Activated B cell treated with CpG ODN at 0.5 μM for 24 hours (primary cell): ENCODE measurements at regions of chr9 and their contacts with region 1.

Region 1: DNA sequence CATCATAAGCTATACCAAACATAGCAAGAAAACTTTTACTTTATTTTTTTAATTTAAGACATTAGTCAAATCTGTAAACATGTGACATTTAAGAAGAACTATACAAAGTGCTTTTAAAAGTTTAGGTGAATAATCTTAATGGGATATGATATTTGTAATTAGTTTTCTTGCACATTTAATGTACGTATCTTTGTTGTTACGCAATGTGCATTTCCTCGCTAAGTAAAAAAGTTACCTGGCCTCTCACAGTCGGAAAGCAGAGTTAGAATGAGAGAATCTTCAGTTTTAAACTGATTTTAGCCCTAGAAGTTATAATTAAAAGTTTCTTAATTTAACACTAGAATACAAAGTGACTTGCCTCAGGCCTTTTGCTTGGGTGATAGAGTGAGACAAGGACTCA is 589.8 kb downstream of the DMRTA1 start:
- DNase-seq: no peak
- ATAC-seq: no peak
- H3K4me3 Mint-ChIP-seq: no peak overlapping the region
- H3K27ac Mint-ChIP-seq: no peak overlapping the region
- H3K4me1 Mint-ChIP-seq: no peaks in the 10 kb centered on the region
- H3K27me3 Mint-ChIP-seq: no peaks in the 10 kb centered on the region
- CTCF ChIP-seq: no peak

Region 2: DNA sequence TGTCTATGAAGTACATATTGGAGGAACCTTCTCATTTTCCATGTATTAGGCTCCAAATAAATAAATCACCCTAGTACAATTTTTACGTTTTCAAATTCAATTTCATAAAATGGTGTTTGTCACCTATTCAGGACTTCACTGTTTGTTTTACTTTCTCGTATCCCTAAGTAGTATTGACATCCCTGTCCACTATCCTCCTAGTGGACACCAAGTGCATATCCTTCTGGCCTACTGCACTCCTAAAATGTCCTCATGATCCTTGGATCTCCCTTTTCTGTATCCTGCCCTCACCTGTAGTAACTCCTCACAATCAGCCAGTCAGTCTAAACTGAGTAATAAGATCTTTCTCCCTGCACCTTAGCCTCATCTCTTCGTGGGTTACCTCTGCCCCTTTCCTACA is 49.9 kb before region 1 on chr9:
- CTCF ChIA-PET with region 1: no interaction called
- POLR2A ChIA-PET with region 1: no interaction called
- intact Hi-C with region 1: no loop called
- DNase-seq: no peak
- ATAC-seq: no peak
- H3K4me3 Mint-ChIP-seq: no peak overlapping the region
- H3K27ac Mint-ChIP-seq: no peak overlapping the region
- H3K4me1 Mint-ChIP-seq: no peaks in the 10 kb centered on the region
- H3K27me3 Mint-ChIP-seq: no peaks in the 10 kb centered on the region
- CTCF ChIP-seq: no peak

Region 3: DNA sequence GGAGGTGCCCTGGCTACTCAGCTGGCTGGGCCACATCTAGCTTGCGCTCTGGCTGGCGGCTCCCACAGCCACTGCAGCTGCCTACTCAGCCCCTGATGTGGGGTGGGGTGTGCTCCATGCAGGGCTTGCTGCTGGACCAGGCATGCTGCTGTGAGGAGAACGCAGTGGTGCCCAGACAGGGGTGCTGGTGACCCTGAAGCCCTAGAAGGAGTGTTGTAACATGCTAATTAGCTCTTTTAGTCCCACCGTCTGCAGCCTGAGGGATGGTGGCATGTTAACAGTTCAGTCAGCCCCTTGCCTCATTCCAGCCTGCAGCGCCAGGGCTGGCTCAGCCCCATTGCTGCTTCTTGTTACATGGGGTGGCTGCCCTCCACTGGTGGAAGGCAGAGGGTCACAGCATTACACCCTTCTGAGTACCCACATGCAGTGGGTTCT is 52.5 kb after region 1 on chr9:
- CTCF ChIA-PET with region 1: no interaction called
- POLR2A ChIA-PET with region 1: no interaction called
- intact Hi-C with region 1: loop called (anchors 10 kb)
- DNase-seq: no peak
- ATAC-seq: no peak
- H3K4me3 Mint-ChIP-seq: no peak overlapping the region
- H3K27ac Mint-ChIP-seq: no peak overlapping the region
- H3K4me1 Mint-ChIP-seq: no peaks in the 10 kb centered on the region
- H3K27me3 Mint-ChIP-seq: no peaks in the 10 kb centered on the region
- CTCF ChIP-seq: no peak

Region 4: DNA sequence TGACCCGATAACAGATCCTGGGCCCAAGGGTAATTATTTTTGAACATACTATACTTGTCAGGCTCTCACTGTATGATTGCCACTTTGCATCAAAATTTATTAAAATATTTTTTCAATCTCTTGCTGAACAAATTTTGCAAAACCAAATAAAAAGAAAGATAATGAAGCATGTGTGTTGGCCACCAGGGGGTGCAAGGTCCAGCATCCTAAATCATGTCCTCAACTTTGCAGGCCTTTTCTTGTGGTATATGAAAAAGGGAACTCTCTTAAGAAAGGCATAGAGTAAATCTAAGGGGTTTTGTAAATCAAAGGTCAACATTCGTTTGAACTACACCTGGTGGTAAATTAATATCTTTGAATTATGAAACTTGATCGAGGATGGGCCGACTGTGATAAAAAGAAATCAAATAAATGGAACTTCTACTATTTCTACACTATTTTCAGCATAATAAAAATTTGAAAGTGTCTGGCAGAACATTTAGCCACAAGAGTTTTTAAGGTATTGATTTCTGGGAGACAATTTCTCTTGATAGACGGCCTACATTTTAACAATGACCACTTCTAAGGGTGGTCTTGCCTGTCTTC is 86.7 kb after region 1 on chr9:
- CTCF ChIA-PET with region 1: no interaction called
- POLR2A ChIA-PET with region 1: no interaction called
- intact Hi-C with region 1: no loop called
- DNase-seq: no peak
- ATAC-seq: no peak
- H3K4me3 Mint-ChIP-seq: no peak overlapping the region
- H3K27ac Mint-ChIP-seq: no peak overlapping the region
- H3K4me1 Mint-ChIP-seq: no peaks in the 10 kb centered on the region
- H3K27me3 Mint-ChIP-seq: no peaks in the 10 kb centered on the region
- CTCF ChIP-seq: no peak